ENCODE measurements at regions of chr7 and their contacts with region 1.

Region 1: GRCh38 chr7:143372070-143372469 is 9.1 kb upstream of the ZYX start:
- DNase-seq: peak; percentile 57 to 60
- ATAC-seq: peak in 7 of 8 donors; percentile 52 to 75 (median 63)
- H3K4me3 ChIP-seq: no peak overlapping the region
- H3K27ac ChIP-seq: peak overlapping the region in 1 of 10 donors; percentile 58
- H3K4me1 ChIP-seq: peaks cover 0 to 47% (median 0%) of the 10 kb centered on the region in 9 donors
- H3K27me3 ChIP-seq: no peaks in the 10 kb centered on the region
- CTCF ChIP-seq: peak in 2 of 9 donors; percentile 9 to 27

Region 2: DNA sequence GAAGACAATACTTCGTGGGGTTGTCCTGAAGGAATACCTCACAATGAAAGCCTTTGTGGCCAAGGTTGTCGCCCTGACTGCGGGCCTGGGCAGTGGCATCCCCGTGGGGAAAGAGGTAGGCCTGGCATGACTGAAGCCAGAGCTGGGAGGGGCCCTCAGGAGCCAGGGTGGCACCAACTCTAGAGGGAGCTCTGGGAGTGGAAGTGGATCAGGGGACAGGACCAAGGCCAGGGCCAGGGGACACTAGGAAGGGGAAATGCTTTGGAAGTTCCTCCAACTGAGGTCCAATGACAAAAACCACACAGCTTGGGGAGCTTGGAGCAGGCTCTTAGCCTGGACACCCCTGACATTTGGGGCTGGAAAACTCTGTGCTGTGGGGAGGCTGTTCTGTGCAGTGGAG is 50.3 kb before region 1 on chr7:
- intact Hi-C with region 1: loop called in 1 of 10 experiments (anchors 10 kb)
- DNase-seq: no peak
- ATAC-seq: peak in 1 of 8 donors; percentile 48
- H3K4me3 ChIP-seq: no peak overlapping the region
- H3K27ac ChIP-seq: peak overlapping the region in 1 of 10 donors; percentile 21
- H3K4me1 ChIP-seq: peaks cover 0 to 13% (median 6%) of the 10 kb centered on the region in 9 donors
- H3K27me3 ChIP-seq: no peaks in the 10 kb centered on the region
- CTCF ChIP-seq: peak in 3 of 9 donors; percentile 12 to 45 (median 17)